Naive thymus-derived CD4-positive, alpha-beta T cell (primary cell): ENCODE measurements at regions of chr14 and their contacts with region 1.

Region 1: GRCh38 chr14:73713803-73714655 is at the start of gene PNMA1:
- DNase-seq: peak; percentile 76 to 90 (median 83)
- ATAC-seq: peak; percentile 91
- H3K4me3 ChIP-seq: peak within 1 kb of the TSS; percentile 92
- H3K4me3 Mint-ChIP-seq: peak within 1 kb of the TSS; percentile 91 to 100 (median 97)
- H3K27ac ChIP-seq: peak within 1 kb of the TSS; percentile 83
- H3K27ac Mint-ChIP-seq: peak within 1 kb of the TSS; percentile 93 to 99 (median 96)
- H3K4me1 ChIP-seq: peaks cover 3 to 4% of the 10 kb centered on the region in 2 donors
- H3K4me1 Mint-ChIP-seq: peaks cover 22 to 40% (median 26%) of the 10 kb centered on the region in 7 donors
- H3K27me3 ChIP-seq: no peaks in the 10 kb centered on the region
- H3K27me3 Mint-ChIP-seq: no peaks in the 10 kb centered on the region
- total RNA-seq, gene PNMA1: 21.6 to 40.4 (median 37.1) TPM

Region 2: GRCh38 chr14:73568381-73568781 is 145.6 kb before region 1 on chr14:
- CTCF ChIA-PET with region 1: no interaction called
- POLR2A ChIA-PET with region 1: no interaction called
- intact Hi-C with region 1: loop called in 1 of 2 experiments (anchors 10 kb)
- DNase-seq: no peak
- ATAC-seq: no peak
- H3K4me3 ChIP-seq: peak overlapping the region; percentile 73
- H3K4me3 Mint-ChIP-seq: peak overlapping the region; percentile 92 to 97 (median 94)
- H3K27ac ChIP-seq: peak overlapping the region; percentile 77
- H3K27ac Mint-ChIP-seq: peak overlapping the region; percentile 92 to 98 (median 95)
- H3K4me1 ChIP-seq: peaks cover 21% of the 10 kb centered on the region in 2 donors
- H3K4me1 Mint-ChIP-seq: peaks cover 29 to 52% (median 44%) of the 10 kb centered on the region in 7 donors
- H3K27me3 ChIP-seq: no peaks in the 10 kb centered on the region
- H3K27me3 Mint-ChIP-seq: no peaks in the 10 kb centered on the region

Region 3: GRCh38 chr14:73644531-73645247 is 69.3 kb before region 1 on chr14 and contains the start of gene DNAL1:
- CTCF ChIA-PET with region 1: no interaction called
- POLR2A ChIA-PET with region 1: interaction called, 9 read pairs
- intact Hi-C with region 1: loop called (anchors 1 kb)
- DNase-seq: peak; percentile 80 to 93 (median 86)
- ATAC-seq: peak; percentile 99
- H3K4me3 ChIP-seq: peak within 1 kb of the TSS; percentile 92
- H3K4me3 Mint-ChIP-seq: peak within 1 kb of the TSS; percentile 89 to 99 (median 94)
- H3K27ac ChIP-seq: peak within 1 kb of the TSS; percentile 80
- H3K27ac Mint-ChIP-seq: peak within 1 kb of the TSS; percentile 86 to 98 (median 93)
- H3K4me1 ChIP-seq: peaks cover 7 to 9% of the 10 kb centered on the region in 2 donors
- H3K4me1 Mint-ChIP-seq: peaks cover 8 to 20% (median 16%) of the 10 kb centered on the region in 7 donors
- H3K27me3 ChIP-seq: no peaks in the 10 kb centered on the region
- H3K27me3 Mint-ChIP-seq: no peaks in the 10 kb centered on the region
- total RNA-seq, gene DNAL1: 3.6 to 8.4 (median 6.5) TPM

Region 4: DNA sequence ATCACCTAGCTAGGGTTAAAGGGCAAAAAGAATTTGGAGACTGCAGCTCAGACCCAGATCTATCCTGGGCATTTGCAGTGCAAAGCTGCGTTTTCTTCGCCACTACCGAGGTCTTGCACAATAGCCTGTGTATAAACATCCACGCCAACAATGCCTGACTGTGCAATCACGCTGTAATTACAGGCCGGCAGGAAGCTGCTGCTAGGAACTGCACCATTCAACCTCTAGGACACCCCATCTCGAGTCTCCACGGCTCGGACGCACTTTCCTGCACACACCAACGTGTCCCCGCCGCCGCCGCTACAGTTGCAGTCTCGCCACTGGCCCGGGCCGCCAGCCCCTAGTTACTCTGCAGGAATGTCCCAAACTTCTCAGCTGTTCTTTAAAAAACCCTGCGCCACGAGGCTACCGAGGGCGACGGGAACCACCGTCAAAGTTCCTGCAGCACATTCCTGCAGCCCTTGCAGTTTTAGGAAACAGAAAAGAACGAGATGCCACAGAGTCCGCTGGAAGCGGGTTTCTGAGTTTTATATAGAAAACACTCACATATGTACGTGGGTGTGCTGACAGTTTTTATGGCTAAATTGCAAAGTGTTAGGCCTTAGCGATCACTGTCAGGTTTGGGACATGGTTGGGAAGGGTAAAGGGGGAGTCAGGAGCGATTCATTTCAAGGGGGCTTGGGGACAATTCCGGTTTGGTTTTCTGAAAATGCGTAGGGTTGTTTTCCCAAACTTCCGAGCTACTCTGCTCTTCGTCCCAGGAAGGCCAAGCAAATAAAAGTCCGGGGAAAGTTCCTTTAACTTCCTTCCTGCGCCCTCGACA is 72.1 kb after region 1 on chr14:
- CTCF ChIA-PET with region 1: no interaction called
- POLR2A ChIA-PET with region 1: interaction called, 7 read pairs
- intact Hi-C with region 1: loop called (anchors 1 to 5 kb)
- DNase-seq: peak; percentile 41 to 65 (median 60)
- ATAC-seq: peak; percentile 74
- H3K4me3 ChIP-seq: peak overlapping the region; percentile 91
- H3K4me3 Mint-ChIP-seq: peak overlapping the region; percentile 87 to 99 (median 97)
- H3K27ac ChIP-seq: peak overlapping the region; percentile 96
- H3K27ac Mint-ChIP-seq: peak overlapping the region; percentile 92 to 97 (median 94)
- H3K4me1 ChIP-seq: peaks cover 45% of the 10 kb centered on the region in 2 donors
- H3K4me1 Mint-ChIP-seq: peaks cover 50 to 73% (median 66%) of the 10 kb centered on the region in 7 donors
- H3K27me3 ChIP-seq: no peaks in the 10 kb centered on the region
- H3K27me3 Mint-ChIP-seq: no peaks in the 10 kb centered on the region

Region 5: DNA sequence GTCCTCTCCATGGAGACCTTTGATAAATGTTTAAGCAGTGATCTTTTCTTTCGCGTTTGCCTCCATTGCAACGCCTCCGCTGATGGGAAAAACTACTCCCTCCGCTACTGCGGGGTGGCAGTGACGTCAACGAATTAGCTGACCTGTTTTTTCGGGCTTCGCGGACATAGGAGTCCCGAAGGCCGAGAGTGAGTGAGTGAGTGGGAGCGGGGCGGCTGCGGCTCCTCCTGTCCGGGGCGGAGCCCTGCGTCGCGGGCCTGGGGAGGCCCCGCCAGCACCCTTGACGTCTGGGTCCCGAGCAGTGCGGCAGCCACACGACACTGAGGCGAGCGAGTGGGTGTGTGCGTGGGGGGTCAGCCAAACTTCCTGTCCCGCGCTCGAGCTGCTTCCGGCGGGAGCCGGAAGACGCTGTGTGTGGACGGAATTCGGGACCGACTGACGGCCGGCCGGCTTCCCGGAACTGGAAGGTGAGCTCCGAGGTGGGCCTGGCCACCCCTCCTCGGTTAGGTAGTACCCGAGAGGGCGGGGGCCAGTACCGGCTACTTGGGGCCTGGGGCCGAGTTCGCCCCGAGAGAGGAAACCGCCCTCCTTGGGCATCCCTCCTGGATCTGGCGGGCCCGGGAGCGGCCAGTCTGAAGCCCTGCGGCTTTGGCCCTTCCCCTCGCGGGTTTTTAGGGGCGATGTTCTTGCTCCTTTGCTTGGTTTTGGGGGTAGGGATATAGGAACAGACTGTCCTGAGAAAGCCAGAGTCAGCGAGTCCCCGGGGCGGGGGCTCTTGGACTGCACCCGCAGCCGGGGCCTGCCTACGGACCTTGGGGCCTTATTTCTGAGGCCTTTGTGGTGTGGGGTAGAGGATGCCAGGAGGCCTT is 172.7 kb after region 1 on chr14 and contains the start of gene ZNF410:
- CTCF ChIA-PET with region 1: no interaction called
- POLR2A ChIA-PET with region 1: no interaction called
- intact Hi-C with region 1: loop called in 1 of 2 experiments (anchors 1 kb)
- DNase-seq: peak; percentile 74 to 94 (median 83)
- ATAC-seq: peak; percentile 99
- H3K4me3 ChIP-seq: peak within 1 kb of the TSS; percentile 82
- H3K4me3 Mint-ChIP-seq: peak within 1 kb of the TSS; percentile 90 to 99 (median 98)
- H3K27ac ChIP-seq: peak within 1 kb of the TSS; percentile 97
- H3K27ac Mint-ChIP-seq: peak within 1 kb of the TSS; percentile 64 to 100 (median 99)
- H3K4me1 ChIP-seq: peaks cover 17 to 22% of the 10 kb centered on the region in 2 donors
- H3K4me1 Mint-ChIP-seq: peaks cover 24 to 56% (median 47%) of the 10 kb centered on the region in 7 donors
- H3K27me3 ChIP-seq: no peaks in the 10 kb centered on the region
- H3K27me3 Mint-ChIP-seq: no peaks in the 10 kb centered on the region
- total RNA-seq, gene ZNF410: 44.8 to 79.7 (median 51.1) TPM